GM10248 (cell line): ENCODE measurements at regions of chr7 and their contacts with region 1.

Region 1: GRCh38 chr7:28658381-28658780 is 246.1 kb downstream of the CREB5 start:
- DNase-seq: no peak
- CTCF ChIP-seq: no peak

Region 2: DNA sequence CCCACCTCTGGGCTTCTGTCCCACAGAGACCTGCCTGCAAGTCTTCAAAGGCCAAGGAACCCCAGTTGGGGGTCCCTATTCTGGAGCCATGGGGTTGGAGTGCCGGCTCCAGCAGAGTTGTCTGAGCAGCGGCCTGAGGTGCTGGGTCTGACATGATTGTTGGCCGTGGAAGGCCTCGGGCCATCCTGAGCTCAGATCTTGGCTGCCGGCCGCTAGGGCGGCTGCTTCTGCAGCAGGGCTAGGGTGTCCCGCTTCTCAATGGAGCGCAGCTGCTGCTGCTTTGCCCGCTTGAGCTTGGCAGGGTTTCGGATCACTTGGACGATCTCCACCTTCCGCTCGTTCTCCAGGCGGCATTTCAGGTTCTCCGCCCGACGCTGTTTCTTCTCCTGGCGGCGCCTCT is 1166.9 kb before region 1 on chr7:
- CTCF ChIA-PET with region 1: no interaction called
- POLR2A ChIA-PET with region 1: no interaction called
- DNase-seq: no peak
- CTCF ChIP-seq: no peak

Region 3: DNA sequence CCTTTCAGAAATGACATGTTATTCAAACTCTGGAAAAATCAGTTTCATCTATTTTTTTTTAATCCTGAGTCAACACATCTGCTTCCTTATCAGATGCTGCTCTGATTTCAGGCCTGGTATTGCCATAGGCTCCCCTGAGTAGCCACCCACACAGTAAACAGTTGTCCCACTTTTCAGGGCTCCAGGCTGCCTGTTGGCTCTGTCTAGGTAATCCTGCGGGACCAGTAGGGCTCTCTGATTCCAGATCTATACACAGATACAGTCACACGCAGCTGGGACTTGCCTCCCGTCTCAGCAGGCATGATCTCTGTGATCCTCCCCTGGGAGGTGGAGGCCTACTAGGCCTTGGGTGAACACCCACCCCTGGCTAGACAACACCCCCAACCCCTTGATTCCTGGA is 40.0 kb before region 1 on chr7:
- CTCF ChIA-PET with region 1: no interaction called
- POLR2A ChIA-PET with region 1: no interaction called
- DNase-seq: no peak
- CTCF ChIP-seq: no peak

Region 4: GRCh38 chr7:28647081-28647421 is 11.3 kb before region 1 on chr7:
- CTCF ChIA-PET with region 1: interaction called, 20 read pairs
- POLR2A ChIA-PET with region 1: no interaction called
- DNase-seq: no peak
- CTCF ChIP-seq: no peak

Region 5: GRCh38 chr7:28953633-28954032 is 295.3 kb after region 1 on chr7:
- CTCF ChIA-PET with region 1: no interaction called
- POLR2A ChIA-PET with region 1: no interaction called
- DNase-seq: no peak
- CTCF ChIP-seq: no peak